ENCODE measurements at regions of chr12 and their contacts with region 1.

Region 1: GRCh38 chr12:50222275-50222795 is 55.2 kb upstream of the CERS5 start:
- DNase-seq: no peak
- ATAC-seq: peak; percentile 92

Region 2: GRCh38 chr12:50111693-50112455 is 110.5 kb before region 1 on chr12 and contains the start of gene COX14:
- intact Hi-C with region 1: no loop called
- DNase-seq: peak; percentile 99
- ATAC-seq: peak; percentile 92
- total RNA-seq, gene COX14: 234 TPM

Region 3: DNA sequence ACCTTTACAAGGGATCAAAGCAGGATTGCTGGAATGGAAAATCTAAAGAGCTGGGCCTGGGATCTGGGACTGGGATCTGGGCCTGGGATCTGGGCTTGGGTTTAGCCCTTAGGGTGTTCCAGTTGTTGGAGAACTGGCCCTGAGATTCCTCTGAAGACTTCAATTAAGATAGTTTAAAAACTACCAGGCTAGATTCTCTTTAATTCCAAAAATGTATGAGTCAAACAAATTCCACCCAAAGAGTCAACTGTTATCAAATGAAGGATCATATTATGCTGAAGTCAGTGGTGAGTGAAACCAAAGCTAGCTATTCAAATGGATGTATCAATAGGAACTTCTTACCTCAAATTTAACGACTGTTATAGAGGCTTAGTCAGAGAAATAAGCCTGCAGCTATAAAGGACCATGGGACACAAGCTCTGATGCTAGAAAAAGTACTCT is 20.4 kb after region 1 on chr12:
- intact Hi-C with region 1: loop called (anchors 2 kb)
- DNase-seq: no peak
- ATAC-seq: no peak

Region 4: GRCh38 chr12:50257686-50258551 is 35.6 kb after region 1 on chr12:
- intact Hi-C with region 1: loop called (anchors 5 kb)
- DNase-seq: no peak
- ATAC-seq: peak; percentile 85

Region 5: GRCh38 chr12:50283229-50283923 is 61.0 kb after region 1 on chr12 and contains the start of gene LIMA1:
- intact Hi-C with region 1: loop called (anchors 5 kb)
- DNase-seq: peak; percentile 95
- ATAC-seq: peak; percentile 99
- total RNA-seq, gene LIMA1: 16.7 TPM

Measured in Right ventricle myocardium inferior (tissue), 1 donor.